Activated CD4-positive, alpha-beta T cell treated with anti-CD3 and anti-CD28 coated beads, Interleukin-2, amount 10 ng/mL, durations not matched to agents 24 days and 14 days (primary cell): ENCODE measurements at regions of chr4 and their contacts with region 1.

Region 1: DNA sequence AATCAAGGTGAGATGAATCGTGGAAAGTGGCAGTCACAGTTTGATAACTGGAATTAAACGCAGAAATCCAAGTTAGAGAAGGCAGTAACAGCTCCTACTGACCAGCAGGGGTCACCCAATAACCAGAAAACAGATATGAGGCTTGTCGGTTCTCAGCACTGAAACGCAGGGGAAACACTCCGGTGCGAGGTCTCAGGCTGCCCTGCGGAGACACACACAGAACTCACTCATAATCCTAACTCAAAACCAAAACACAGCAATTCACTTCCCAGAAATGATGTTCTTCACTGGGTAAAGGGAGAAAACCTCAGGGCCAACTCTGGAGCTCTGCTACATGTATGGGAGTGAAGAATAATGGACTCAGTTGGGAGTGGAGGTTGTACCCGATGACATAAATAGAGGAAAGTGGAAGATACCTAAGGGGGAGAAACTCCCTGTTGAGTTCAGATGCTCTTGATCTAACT is 384.4 kb downstream of the RAPGEF2 start:
- DNase-seq: peak; percentile 76
- H3K4me3 Mint-ChIP-seq: no peak overlapping the region
- H3K27ac Mint-ChIP-seq: no peak overlapping the region
- H3K4me1 Mint-ChIP-seq: no peaks in the 10 kb centered on the region
- H3K27me3 Mint-ChIP-seq: peaks cover 11% of the 10 kb centered on the region

Region 2: GRCh38 chr4:159526172-159526571 is 38.9 kb after region 1 on chr4:
- intact Hi-C with region 1: no loop called
- DNase-seq: no peak
- H3K4me3 Mint-ChIP-seq: no peak overlapping the region
- H3K27ac Mint-ChIP-seq: no peak overlapping the region
- H3K4me1 Mint-ChIP-seq: no peaks in the 10 kb centered on the region
- H3K27me3 Mint-ChIP-seq: no peaks in the 10 kb centered on the region

Region 3: DNA sequence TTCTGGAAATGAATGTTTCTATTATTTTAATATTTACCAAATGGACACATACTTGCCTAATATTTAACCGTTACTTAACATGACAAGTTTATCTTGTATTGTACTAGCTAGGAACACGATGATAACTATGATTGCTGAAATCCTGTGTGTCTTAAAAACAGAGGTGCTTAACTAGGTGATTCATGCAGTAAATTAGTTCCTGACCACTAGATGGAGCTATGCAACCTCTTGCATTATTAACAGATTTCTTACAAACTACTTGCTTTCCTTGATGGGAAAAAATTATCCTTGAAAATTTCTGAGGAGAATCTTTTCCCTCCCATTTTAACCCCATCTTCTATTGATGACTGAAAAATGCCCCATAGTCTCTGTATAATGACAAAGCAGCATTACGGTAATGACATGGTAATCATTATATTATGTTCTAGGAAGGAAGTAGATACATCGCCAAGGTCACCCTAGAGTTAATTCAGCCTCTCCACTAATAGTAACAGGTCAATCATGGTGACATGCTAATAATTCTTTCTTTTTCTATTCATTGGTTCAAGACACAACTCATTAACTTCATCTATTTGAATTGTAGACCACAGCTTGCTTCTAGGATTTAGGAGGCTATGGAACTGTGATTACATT is 459.8 kb after region 1 on chr4:
- intact Hi-C with region 1: loop called (anchors 10 kb)
- DNase-seq: no peak
- H3K4me3 Mint-ChIP-seq: no peak overlapping the region
- H3K27ac Mint-ChIP-seq: no peak overlapping the region
- H3K4me1 Mint-ChIP-seq: no peaks in the 10 kb centered on the region
- H3K27me3 Mint-ChIP-seq: no peaks in the 10 kb centered on the region